Panc1 (cell line): ENCODE measurements at regions of chr14 and their contacts with region 1.

Region 1: GRCh38 chr14:59576332-59577294 is at the start of gene CCDC175:
- DNase-seq: peak; percentile 7
- ATAC-seq: peak; percentile 99
- H3K4me3 ChIP-seq: peak within 1 kb of the TSS; percentile 46 to 60
- H3K27ac ChIP-seq: no peak within 1 kb of the TSS
- H3K4me1 ChIP-seq: no peaks in the 10 kb centered on the region
- H3K27me3 ChIP-seq: no peaks in the 10 kb centered on the region
- CTCF ChIP-seq: peak; percentile 89
- total RNA-seq, gene CCDC175: not detected

Region 2: GRCh38 chr14:58362798-58363412 is 1213.7 kb before region 1 on chr14:
- CTCF ChIA-PET with region 1: no interaction called
- POLR2A ChIA-PET with region 1: interaction called, 10 read pairs
- in situ Hi-C with region 1: no loop called
- intact Hi-C with region 1: no loop called
- DNase-seq: peak; percentile 20
- ATAC-seq: peak; percentile 75; the same call in 1 of the 2 replicates
- H3K4me3 ChIP-seq: no peak overlapping the region
- H3K27ac ChIP-seq: no peak overlapping the region
- H3K4me1 ChIP-seq: no peaks in the 10 kb centered on the region
- H3K27me3 ChIP-seq: no peaks in the 10 kb centered on the region
- CTCF ChIP-seq: peak; percentile 45

Region 3: DNA sequence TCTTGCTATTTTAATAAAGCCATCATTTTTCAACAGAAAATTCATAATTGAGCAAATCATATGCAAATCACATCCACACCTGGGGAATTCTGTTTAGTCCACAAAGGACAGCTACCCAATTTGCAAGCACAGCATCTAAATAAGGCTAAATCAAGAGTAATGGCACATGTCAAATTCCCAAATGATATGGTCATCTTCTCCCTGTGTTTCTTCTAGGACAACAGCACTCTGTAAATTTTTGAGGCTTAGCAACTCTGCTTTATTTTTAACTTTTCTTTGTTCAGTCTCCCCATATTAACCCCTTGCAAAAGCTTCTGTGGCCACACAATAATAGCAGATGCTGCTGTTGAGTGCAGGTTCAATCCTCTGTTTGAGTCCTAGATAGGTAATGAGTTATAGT is 543.8 kb before region 1 on chr14:
- CTCF ChIA-PET with region 1: no interaction called
- POLR2A ChIA-PET with region 1: no interaction called
- in situ Hi-C with region 1: no loop called
- intact Hi-C with region 1: no loop called
- DNase-seq: no peak
- ATAC-seq: no peak
- H3K4me3 ChIP-seq: no peak overlapping the region
- H3K27ac ChIP-seq: no peak overlapping the region
- H3K4me1 ChIP-seq: no peaks in the 10 kb centered on the region
- H3K27me3 ChIP-seq: no peaks in the 10 kb centered on the region; the same call in 1 of the 2 replicates
- CTCF ChIP-seq: no peak

Region 4: DNA sequence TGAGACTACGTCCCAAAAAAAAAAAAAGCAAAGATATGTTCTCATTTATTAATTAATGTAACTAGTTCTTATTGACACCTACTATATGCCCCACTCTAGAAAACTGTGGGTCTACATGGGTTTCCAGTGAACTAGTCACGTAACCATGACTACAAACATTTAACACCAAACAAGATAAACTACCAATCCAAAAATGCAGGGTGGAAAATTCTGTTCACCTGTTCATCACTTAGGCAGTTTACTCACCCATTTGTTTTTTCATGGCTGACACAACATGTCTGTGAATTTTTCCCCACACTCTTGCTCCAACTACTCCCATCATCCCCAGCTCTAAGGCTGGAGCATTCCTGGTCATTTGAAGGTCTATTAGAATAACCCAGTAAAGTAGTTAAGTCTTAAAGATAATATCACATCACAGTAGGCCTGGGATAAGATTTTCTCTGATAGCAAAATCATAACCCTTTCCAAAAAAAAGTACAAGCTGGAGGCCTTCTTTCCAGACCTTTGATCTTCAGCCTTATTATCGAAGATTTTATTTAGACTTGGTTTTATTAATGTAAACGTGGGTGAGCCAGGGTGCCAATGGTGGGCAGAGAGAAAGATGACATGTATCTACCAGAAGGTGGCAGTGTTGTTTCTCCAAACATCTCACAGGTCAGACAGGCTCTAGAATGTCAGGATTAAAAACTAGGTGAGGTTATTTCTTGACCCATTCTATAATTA is 449.7 kb before region 1 on chr14:
- CTCF ChIA-PET with region 1: no interaction called
- POLR2A ChIA-PET with region 1: no interaction called
- in situ Hi-C with region 1: no loop called
- intact Hi-C with region 1: loop called (anchors 10 kb)
- DNase-seq: peak; percentile 30
- ATAC-seq: peak; percentile 89
- H3K4me3 ChIP-seq: no peak overlapping the region
- H3K27ac ChIP-seq: no peak overlapping the region
- H3K4me1 ChIP-seq: no peaks in the 10 kb centered on the region
- H3K27me3 ChIP-seq: peaks cover 4% of the 10 kb centered on the region; the same call in 1 of the 2 replicates
- CTCF ChIP-seq: peak; percentile 66; the same call in 1 of the 2 replicates

Region 5: DNA sequence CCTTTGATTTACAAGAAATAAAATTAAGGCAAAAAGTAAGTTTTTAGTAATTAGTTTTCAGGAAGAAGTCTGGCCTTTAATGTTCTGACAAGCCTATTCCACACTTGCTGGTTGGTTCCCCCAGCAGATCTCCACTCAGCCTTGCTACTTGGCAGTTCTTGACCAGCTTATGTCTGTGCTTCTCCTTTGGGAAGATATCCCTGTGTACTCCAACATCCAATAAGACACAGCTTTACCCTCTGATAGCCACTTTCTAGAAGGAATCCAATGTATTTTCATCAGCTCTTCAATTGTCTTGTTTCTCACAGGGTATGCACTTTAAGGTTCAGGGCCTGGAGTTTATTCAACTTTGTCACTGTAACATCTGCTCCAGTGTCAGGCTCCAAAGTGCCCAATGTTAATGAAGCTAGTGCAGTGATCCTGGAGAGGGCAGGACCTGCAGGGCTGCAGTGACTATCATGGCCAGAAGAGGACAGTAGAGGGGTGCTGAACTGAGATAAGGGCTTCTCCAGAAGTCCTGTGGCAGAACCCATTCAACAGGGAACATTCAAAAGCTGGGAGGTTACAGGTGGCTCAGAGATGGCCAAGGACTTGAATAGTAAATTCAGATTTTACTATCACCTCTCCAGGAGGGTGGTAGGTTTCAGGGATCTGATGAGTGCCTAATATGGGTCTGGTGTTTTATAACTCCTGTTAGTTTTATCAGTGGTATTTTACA is 69.4 kb before region 1 on chr14:
- CTCF ChIA-PET with region 1: interaction called, 11 read pairs
- POLR2A ChIA-PET with region 1: no interaction called
- in situ Hi-C with region 1: no loop called
- intact Hi-C with region 1: loop called (anchors 2 kb)
- DNase-seq: peak; percentile 55
- ATAC-seq: peak; percentile 89
- H3K4me3 ChIP-seq: no peak overlapping the region
- H3K27ac ChIP-seq: no peak overlapping the region
- H3K4me1 ChIP-seq: no peaks in the 10 kb centered on the region
- H3K27me3 ChIP-seq: no peaks in the 10 kb centered on the region
- CTCF ChIP-seq: peak; percentile 86

Region 6: GRCh38 chr14:59664741-59665140 is 88.1 kb after region 1 on chr14:
- CTCF ChIA-PET with region 1: no interaction called
- POLR2A ChIA-PET with region 1: interaction called, 16 read pairs
- in situ Hi-C with region 1: no loop called
- intact Hi-C with region 1: no loop called
- DNase-seq: no peak
- ATAC-seq: no peak
- H3K4me3 ChIP-seq: no peak overlapping the region
- H3K27ac ChIP-seq: no peak overlapping the region
- H3K4me1 ChIP-seq: no peaks in the 10 kb centered on the region
- H3K27me3 ChIP-seq: no peaks in the 10 kb centered on the region
- CTCF ChIP-seq: no peak

Region 7: GRCh38 chr14:59814988-59815387 is 238.4 kb after region 1 on chr14:
- CTCF ChIA-PET with region 1: no interaction called
- POLR2A ChIA-PET with region 1: interaction called, 10 read pairs
- in situ Hi-C with region 1: no loop called
- intact Hi-C with region 1: no loop called
- DNase-seq: no peak
- ATAC-seq: no peak
- H3K4me3 ChIP-seq: no peak overlapping the region
- H3K27ac ChIP-seq: no peak overlapping the region
- H3K4me1 ChIP-seq: no peaks in the 10 kb centered on the region
- H3K27me3 ChIP-seq: no peaks in the 10 kb centered on the region
- CTCF ChIP-seq: no peak

Region 8: GRCh38 chr14:60195179-60195810 is 618.7 kb after region 1 on chr14:
- CTCF ChIA-PET with region 1: no interaction called
- POLR2A ChIA-PET with region 1: no interaction called
- in situ Hi-C with region 1: no loop called
- intact Hi-C with region 1: no loop called
- DNase-seq: no peak
- ATAC-seq: no peak
- H3K4me3 ChIP-seq: no peak overlapping the region
- H3K27ac ChIP-seq: no peak overlapping the region
- H3K4me1 ChIP-seq: no peaks in the 10 kb centered on the region
- H3K27me3 ChIP-seq: no peaks in the 10 kb centered on the region
- CTCF ChIP-seq: peak; percentile 28